WTC11 (cell line): ENCODE measurements at regions of chr14 and their contacts with region 1.

Region 1: GRCh38 chr14:51658441-51659173 is 6.9 kb downstream of the FRMD6 start:
- DNase-seq: no peak
- ATAC-seq: no peak
- H3K4me3 Mint-ChIP-seq: no peak overlapping the region
- H3K27ac Mint-ChIP-seq: peak overlapping the region; percentile 16; the same call in 1 of the 2 replicates
- H3K4me1 Mint-ChIP-seq: peaks cover 47% of the 10 kb centered on the region
- H3K27me3 Mint-ChIP-seq: no peaks in the 10 kb centered on the region
- CTCF ChIP-seq: no peak

Region 2: GRCh38 chr14:51356381-51356780 is 302.2 kb before region 1 on chr14:
- CTCF ChIA-PET with region 1: no interaction called
- POLR2A ChIA-PET with region 1: interaction called, 12 read pairs
- DNase-seq: no peak
- ATAC-seq: no peak
- H3K4me3 Mint-ChIP-seq: no peak overlapping the region
- H3K27ac Mint-ChIP-seq: no peak overlapping the region
- H3K4me1 Mint-ChIP-seq: 0 out of 2 replicates have a peak, but pooled peaks cover 3% of the 10 kb centered on the region
- H3K27me3 Mint-ChIP-seq: no peaks in the 10 kb centered on the region
- CTCF ChIP-seq: no peak

Region 3: GRCh38 chr14:51776102-51776894 is 117.7 kb after region 1 on chr14:
- CTCF ChIA-PET with region 1: no interaction called
- POLR2A ChIA-PET with region 1: no interaction called
- DNase-seq: peak; percentile 77
- ATAC-seq: peak; percentile 92
- H3K4me3 Mint-ChIP-seq: peak overlapping the region; percentile 58
- H3K27ac Mint-ChIP-seq: peak overlapping the region; percentile 90; the same call in 1 of the 2 replicates
- H3K4me1 Mint-ChIP-seq: peaks cover 7% of the 10 kb centered on the region
- H3K27me3 Mint-ChIP-seq: no peaks in the 10 kb centered on the region
- CTCF ChIP-seq: peak; percentile 40

Region 4: GRCh38 chr14:51929906-51930682 is 271.5 kb after region 1 on chr14:
- CTCF ChIA-PET with region 1: no interaction called
- POLR2A ChIA-PET with region 1: no interaction called
- DNase-seq: no peak
- ATAC-seq: no peak
- H3K4me3 Mint-ChIP-seq: no peak overlapping the region
- H3K27ac Mint-ChIP-seq: no peak overlapping the region
- H3K4me1 Mint-ChIP-seq: no peaks in the 10 kb centered on the region
- H3K27me3 Mint-ChIP-seq: no peaks in the 10 kb centered on the region
- CTCF ChIP-seq: no peak